GM10248 (cell line): ENCODE measurements at regions of chr18 and their contacts with region 1.

Region 1: DNA sequence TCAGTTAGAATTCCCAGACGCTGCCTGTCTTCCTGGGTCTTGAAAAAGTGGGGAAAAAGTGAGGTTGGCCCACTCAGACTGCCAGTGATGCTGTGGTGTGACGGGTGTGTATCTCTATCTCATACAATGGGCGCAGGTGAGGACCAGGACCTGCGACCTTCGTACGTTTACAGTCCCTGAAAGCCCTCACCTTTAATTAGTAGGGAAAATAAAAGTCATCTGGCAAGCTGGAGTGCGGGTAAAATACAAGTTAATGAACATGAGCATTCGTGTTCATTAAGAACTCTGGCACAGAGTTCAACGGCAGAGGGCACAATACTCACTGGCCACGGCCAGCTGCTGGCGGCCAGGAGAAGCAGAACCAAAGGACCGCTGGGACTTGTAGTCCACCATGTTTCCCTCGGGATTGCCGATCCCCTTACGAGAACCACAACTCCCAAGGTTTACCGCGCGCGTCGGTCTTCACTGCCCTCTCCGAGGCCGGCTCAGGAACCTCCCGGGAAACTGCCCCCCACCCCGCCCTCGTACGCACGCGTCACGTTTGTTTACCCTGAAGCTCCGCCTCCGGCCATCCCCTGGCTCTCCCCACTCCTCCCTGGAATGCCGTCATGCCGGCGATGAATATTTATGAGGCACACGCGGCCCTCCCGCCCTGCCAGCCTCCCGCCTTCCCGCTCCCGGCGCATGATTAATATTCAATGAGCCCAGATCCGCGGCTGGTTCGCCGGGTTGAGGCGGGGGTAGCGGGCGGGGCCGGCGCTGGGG is 488 bp upstream of the PHLPP1 start:
- DNase-seq: peak; percentile 94
- CTCF ChIP-seq: peak; percentile 77

Region 2: DNA sequence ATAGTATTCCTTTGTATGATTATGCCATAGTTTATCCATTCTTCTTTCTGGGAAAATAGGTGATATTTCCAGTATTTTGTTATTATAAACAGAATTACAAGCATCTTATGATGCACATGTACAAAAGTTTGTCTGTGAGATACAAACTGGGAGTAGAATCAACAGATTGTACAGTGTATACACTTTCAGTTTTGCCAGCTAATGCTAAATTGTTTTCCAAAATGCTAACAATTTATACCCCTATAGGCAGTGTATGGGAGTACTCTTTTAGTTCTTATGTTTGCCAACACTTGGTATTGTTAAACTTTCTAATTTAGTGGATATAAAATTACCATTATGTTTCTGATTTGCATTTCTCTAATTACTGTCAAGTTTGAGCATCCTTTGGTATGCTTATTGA is 420.8 kb before region 1 on chr18:
- CTCF ChIA-PET with region 1: no interaction called
- POLR2A ChIA-PET with region 1: no interaction called
- DNase-seq: no peak
- CTCF ChIP-seq: no peak

Region 3: DNA sequence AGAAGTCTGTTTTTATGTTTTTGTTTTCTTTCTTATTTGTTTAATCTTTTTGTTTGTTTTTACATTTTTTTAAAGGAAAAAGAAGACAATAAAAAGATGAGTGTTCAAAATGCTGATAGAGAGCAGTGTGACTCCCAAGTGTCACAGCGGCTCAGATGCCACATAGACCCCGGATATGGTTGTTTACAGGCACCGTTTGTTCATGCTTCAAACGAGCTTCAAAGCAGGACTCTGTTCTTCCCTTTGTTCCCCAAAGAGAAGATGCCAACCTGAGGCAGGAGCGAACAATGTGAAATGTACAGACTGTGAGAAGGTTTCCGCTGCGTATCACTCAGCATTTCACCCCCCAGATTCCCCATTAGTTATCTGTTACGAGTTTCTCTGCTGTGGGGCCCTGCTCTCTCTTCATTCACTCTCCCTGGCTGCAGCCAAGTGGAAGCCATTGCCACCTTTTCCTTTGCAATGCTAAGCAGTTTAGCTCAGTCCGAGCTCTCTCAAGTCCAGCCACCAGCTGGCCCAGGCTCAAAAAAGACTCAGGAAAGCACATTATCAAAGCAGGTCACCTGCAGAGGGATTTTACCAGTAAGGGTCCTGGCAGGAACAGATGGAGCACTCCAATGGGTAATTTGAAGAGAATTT is 35.9 kb before region 1 on chr18:
- CTCF ChIA-PET with region 1: no interaction called
- POLR2A ChIA-PET with region 1: no interaction called
- DNase-seq: no peak
- CTCF ChIP-seq: no peak

Region 4: GRCh38 chr18:62702253-62702652 is 12.6 kb before region 1 on chr18:
- CTCF ChIA-PET with region 1: interaction called, 14 read pairs
- POLR2A ChIA-PET with region 1: no interaction called
- DNase-seq: no peak
- CTCF ChIP-seq: no peak